ENCODE measurements at regions of chr1 and their contacts with region 1.

Region 1: GRCh38 chr1:21216835-21217811 is 40.4 kb upstream of the EIF4G3 start:
- DNase-seq: no peak
- ATAC-seq: peak; percentile 45
- H3K4me3 ChIP-seq: no peak overlapping the region
- H3K27ac ChIP-seq: no peak overlapping the region
- H3K4me1 ChIP-seq: no peaks in the 10 kb centered on the region
- H3K27me3 ChIP-seq: no peaks in the 10 kb centered on the region
- CTCF ChIP-seq: peak; percentile 91

Region 2: DNA sequence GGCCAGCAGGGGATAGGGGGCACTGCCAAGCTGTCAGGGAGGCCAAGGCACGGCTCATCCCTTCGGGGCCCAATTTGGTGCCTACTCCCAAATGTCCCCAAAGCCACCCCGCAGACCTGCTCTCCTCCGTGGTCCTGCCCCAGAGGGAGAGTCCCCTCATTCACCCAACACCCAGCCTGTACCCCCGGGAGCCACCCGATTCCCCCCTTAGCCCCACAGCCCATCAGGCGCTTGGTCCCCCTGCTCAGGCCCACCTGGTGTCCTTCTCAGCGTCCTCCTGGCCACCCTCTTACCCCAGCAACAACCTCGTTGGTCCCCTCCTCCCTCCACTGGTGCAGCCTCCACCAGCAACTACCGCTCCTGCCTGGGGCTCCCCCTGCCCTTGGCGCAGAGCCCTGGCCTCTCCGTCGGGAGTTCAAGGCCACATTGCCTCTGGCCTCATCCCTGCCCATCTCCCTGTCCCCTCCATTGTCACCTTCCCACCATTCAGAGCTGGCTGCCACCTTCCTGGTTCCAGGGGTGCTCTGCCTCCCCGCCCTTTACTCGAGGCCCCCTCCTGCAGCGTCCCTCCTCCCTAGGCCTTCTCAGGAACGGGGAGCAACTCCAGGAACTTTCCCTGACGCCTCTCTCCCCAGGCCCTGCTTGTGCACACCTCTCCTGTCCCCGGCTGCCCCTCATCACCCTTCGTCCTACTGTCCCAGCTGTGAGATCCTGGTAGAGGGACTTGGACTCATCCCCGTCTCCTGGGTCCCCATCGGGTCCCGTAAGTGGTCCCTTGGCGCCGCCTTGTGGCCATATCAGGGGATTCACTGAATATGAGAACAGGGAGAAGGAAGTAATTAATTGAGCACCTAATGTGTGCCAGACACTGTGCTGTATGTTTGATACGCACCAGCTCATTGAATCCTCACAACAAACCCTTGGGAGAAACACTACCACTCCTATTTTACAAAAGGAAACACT is 378.1 kb after region 1 on chr1:
- CTCF ChIA-PET with region 1: no interaction called
- POLR2A ChIA-PET with region 1: interaction called, 15 read pairs
- in situ Hi-C with region 1: no loop called
- intact Hi-C with region 1: no loop called
- DNase-seq: no peak
- ATAC-seq: peak; percentile 68
- H3K4me3 ChIP-seq: no peak overlapping the region
- H3K27ac ChIP-seq: no peak overlapping the region
- H3K4me1 ChIP-seq: no peaks in the 10 kb centered on the region; the same call in 1 of the 2 replicates
- H3K27me3 ChIP-seq: no peaks in the 10 kb centered on the region
- CTCF ChIP-seq: peak; percentile 91

Measured in Panc1 (cell line).